Activated naive CD8-positive, alpha-beta T cell treated with anti-CD3 and anti-CD28 coated beads, Interleukin-2, amount 10 ng/mL, durations not matched to agents 7 days and 5 days (primary cell): ENCODE measurements at regions of chr9 and their contacts with region 1.

Region 1: GRCh38 chr9:89477811-89478630 is 19.9 kb downstream of the SEMA4D start:
- DNase-seq: peak; percentile 47
- ATAC-seq: peak; percentile 29
- H3K4me3 Mint-ChIP-seq: peak overlapping the region; percentile 82
- H3K27ac Mint-ChIP-seq: peak overlapping the region; percentile 96
- H3K4me1 Mint-ChIP-seq: peaks cover 80% of the 10 kb centered on the region
- H3K27me3 Mint-ChIP-seq: no peaks in the 10 kb centered on the region

Region 2: DNA sequence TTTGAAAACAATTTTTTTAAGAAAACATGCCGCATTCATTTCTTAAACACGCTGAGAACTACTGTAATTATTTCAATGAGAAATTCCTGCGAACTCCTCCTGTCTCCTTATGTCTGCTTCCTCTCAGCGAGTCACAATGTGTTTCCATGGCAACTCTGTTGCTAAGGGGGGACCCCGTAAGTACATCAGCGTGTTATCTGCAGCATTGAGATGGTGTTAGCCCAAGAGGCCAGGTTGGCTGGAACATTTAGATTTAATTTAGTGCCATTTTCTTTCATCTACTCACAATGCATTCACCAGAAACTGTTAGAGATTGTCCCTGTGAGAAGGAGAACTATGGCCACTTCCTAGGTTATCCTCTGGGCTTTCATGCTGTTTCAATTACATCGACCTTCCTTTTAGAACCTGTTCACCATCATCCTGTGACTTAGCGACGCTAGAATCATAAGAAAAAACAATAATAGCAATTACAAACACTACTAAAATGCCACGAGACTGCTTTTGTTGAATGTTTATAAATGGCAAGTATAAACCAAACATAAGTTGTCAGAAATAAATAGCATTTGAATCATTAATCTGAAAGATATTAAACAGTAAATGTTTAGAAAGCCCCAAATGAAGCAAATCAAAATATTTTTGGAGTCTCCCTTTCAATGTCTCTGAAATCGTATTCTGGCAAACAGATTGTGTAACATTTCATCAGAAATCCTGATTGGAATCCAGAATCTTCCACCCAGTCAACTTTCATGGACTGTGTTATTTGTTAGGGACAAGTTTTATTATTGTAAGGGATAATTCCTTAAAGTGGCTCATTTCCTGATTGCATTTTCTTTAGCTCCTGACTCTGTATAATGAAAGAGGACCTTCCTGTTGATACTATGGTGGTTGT is 259.7 kb before region 1 on chr9:
- POLR2A ChIA-PET with region 1: no interaction called
- DNase-seq: no peak
- ATAC-seq: no peak
- H3K4me3 Mint-ChIP-seq: no peak overlapping the region
- H3K27ac Mint-ChIP-seq: no peak overlapping the region
- H3K4me1 Mint-ChIP-seq: no peaks in the 10 kb centered on the region
- H3K27me3 Mint-ChIP-seq: peaks cover 5% of the 10 kb centered on the region

Region 3: DNA sequence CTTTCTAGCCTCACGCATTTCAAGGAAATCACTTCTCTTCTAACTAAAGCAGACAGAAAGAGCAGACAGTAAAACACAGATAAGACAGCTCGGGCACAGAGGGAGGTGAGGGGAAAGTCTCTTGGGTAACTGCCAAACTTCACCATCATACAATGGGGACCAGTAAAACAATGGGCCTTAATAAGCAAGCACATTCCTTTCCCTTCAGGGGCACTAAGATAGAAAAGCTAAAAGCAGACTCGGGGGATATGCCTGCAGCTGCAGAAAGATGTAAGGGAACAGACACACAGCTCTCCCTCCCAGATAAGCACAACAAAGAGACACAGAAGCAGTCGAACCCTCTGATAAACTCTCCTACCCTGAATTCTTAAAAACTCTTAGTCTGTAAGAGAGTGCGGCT is 182.6 kb before region 1 on chr9:
- POLR2A ChIA-PET with region 1: no interaction called
- DNase-seq: no peak
- ATAC-seq: no peak
- H3K4me3 Mint-ChIP-seq: no peak overlapping the region
- H3K27ac Mint-ChIP-seq: no peak overlapping the region
- H3K4me1 Mint-ChIP-seq: no peaks in the 10 kb centered on the region
- H3K27me3 Mint-ChIP-seq: peaks cover 12% of the 10 kb centered on the region

Region 4: GRCh38 chr9:89455356-89455824 is 22.6 kb before region 1 on chr9:
- POLR2A ChIA-PET with region 1: interaction called, 17 read pairs
- DNase-seq: no peak
- ATAC-seq: peak; percentile 62
- H3K4me3 Mint-ChIP-seq: peak overlapping the region; percentile 69
- H3K27ac Mint-ChIP-seq: peak overlapping the region; percentile 74
- H3K4me1 Mint-ChIP-seq: peaks cover 84% of the 10 kb centered on the region
- H3K27me3 Mint-ChIP-seq: no peaks in the 10 kb centered on the region

Region 5: GRCh38 chr9:89466451-89467277 is 11.4 kb before region 1 on chr9:
- POLR2A ChIA-PET with region 1: interaction called, 17 read pairs
- DNase-seq: peak; percentile 48
- ATAC-seq: peak; percentile 8
- H3K4me3 Mint-ChIP-seq: peak overlapping the region; percentile 67
- H3K27ac Mint-ChIP-seq: peak overlapping the region; percentile 89
- H3K4me1 Mint-ChIP-seq: peaks cover 94% of the 10 kb centered on the region
- H3K27me3 Mint-ChIP-seq: no peaks in the 10 kb centered on the region

Region 6: GRCh38 chr9:89549031-89549644 is 71.1 kb after region 1 on chr9:
- POLR2A ChIA-PET with region 1: interaction called, 15 read pairs
- DNase-seq: peak; percentile 88
- ATAC-seq: peak; percentile 96
- H3K4me3 Mint-ChIP-seq: no peak overlapping the region
- H3K27ac Mint-ChIP-seq: peak overlapping the region; percentile 46
- H3K4me1 Mint-ChIP-seq: peaks cover 15% of the 10 kb centered on the region
- H3K27me3 Mint-ChIP-seq: peaks cover 7% of the 10 kb centered on the region